Activated T-helper 1 cell treated with anti-CD3 and anti-CD28 coated beads, Interleukin-12 subunit alpha, Interleukin-12 subunit beta, Interleukin-2, Interleukin-4 antibody, amounts not matched to agents 30 ng/mL and 10 ng/mL and 1 ng/mL, durations not matched to agents 14 hours and 24 hours and 36 hours (primary cell): ENCODE measurements at regions of chr1 and their contacts with region 1.

Region 1: DNA sequence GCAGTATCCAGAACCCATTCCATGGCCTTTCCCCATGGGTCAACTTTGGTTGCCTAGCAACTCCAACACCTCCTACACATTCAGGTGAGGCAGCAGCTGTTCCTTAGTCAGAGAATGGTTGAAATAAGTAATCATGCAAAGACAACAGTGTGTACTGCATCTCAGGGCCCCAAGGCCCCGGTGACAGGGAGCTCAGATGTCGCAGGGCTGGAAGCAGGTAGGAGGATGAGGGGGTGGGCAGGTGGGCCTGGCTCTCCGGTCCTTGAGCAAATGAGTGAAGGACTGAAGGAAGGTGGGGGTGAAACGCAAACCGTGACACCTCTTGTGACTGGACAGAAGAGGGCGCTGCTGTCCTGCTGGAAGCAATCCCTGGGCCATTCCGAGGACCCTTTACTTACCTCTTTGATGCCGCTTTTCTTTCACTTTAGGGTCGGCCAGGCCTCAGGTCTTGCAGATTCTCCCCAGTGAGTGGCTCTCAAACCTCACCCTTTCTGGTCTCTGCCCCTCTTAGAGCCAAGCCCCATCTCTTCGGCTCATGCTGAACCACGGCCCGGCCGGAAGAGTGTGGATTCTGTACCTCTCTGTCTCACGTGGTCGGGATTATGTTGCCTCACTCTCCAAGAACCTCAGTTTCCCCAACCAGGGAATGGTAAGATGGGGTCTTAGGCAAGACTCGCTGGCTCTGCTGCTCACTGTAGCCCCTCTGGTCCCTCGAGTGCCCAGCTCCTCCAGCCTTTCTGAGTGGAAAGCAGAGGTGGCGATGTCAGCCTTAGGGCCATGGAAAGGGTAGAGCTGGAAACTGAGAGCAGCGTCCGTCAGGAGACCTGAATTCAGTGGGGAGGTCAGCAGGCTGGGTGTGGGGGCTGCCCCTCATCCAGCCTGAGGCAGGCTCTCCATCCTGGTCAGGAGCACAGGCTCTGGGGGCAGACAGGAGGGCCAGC is 5.6 kb upstream of the KCNA10 start:
- DNase-seq: peak; percentile 28
- H3K4me3 Mint-ChIP-seq: no peak overlapping the region
- H3K27ac Mint-ChIP-seq: no peak overlapping the region
- H3K4me1 Mint-ChIP-seq: peaks cover 7% of the 10 kb centered on the region
- H3K27me3 Mint-ChIP-seq: peaks cover 25% of the 10 kb centered on the region

Region 2: GRCh38 chr1:110690709-110691365 is 166.3 kb after region 1 on chr1:
- intact Hi-C with region 1: loop called (anchors 10 kb)
- DNase-seq: no peak
- H3K4me3 Mint-ChIP-seq: no peak overlapping the region
- H3K27ac Mint-ChIP-seq: no peak overlapping the region
- H3K4me1 Mint-ChIP-seq: peaks cover 4% of the 10 kb centered on the region
- H3K27me3 Mint-ChIP-seq: peaks cover 12% of the 10 kb centered on the region